HepG2 (cell line): ENCODE measurements at regions of chr1 and their contacts with region 1.

Region 1: DNA sequence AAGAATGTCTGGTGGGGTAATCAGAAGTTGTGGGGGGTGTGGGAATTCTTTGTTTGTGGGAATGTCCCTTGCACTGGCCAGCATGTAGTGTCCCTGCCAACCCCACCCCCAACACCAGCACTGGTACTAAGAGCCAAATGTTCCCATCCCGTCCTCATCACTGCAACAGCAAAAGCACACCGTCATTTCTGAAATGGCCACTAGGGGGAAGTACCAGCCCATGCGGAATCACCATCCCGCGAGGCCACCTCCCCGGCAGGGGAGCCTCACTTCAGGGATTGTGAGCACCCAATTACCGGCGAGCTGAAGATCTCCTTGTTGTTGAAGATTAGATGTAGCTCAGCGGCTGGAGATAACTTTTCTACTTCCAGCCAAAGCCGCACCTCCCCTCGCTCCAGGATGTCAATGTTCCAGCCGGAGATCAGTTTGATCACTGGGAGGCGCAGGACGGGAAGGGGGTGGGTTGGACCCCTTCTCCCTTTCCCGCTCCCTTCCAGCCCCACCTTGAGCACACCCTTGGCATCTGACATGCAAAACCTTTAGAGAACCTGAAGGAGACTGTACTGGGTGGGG is 41.0 kb downstream of the MYOM3 start:
- DNase-seq: peak; percentile 68
- ATAC-seq: peak; percentile 94
- H3K4me3 ChIP-seq: no peak overlapping the region
- H3K27ac ChIP-seq: no peak overlapping the region
- H3K4me1 ChIP-seq: no peaks in the 10 kb centered on the region
- H3K27me3 ChIP-seq: no peaks in the 10 kb centered on the region
- CTCF ChIP-seq: peak; percentile 96
- EP300 ChIP-seq: no peak
- POLR2A ChIP-seq: no peak
- RAD21 ChIP-seq: peak; percentile 86

Region 2: DNA sequence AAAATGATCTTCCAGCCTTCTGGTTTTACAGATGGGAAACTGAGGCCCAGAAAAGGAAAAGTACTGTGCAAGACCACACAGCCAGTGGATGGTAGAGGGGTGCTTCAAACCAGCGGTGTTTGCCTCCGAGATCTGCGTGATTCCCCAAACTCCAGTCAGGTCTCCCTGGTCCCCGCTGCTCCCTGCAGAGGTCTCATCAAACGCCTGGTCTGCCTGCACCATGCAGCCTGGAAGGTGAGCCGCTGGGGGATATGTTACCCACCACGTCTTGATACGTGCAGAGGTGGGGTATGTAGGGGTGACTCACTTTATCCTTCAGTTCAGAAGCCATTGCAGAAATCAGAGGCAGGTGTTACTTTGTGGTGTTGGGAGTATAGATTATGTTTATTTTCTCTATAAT is 15.2 kb before region 1 on chr1:
- CTCF ChIA-PET with region 1: no interaction called
- POLR2A ChIA-PET with region 1: no interaction called
- in situ Hi-C with region 1: no loop called
- intact Hi-C with region 1: no loop called
- DNase-seq: no peak
- ATAC-seq: no peak
- H3K4me3 ChIP-seq: no peak overlapping the region
- H3K27ac ChIP-seq: no peak overlapping the region
- H3K4me1 ChIP-seq: peaks cover 8% of the 10 kb centered on the region
- H3K27me3 ChIP-seq: no peaks in the 10 kb centered on the region
- CTCF ChIP-seq: no peak
- EP300 ChIP-seq: no peak
- POLR2A ChIP-seq: no peak
- RAD21 ChIP-seq: no peak

Region 3: DNA sequence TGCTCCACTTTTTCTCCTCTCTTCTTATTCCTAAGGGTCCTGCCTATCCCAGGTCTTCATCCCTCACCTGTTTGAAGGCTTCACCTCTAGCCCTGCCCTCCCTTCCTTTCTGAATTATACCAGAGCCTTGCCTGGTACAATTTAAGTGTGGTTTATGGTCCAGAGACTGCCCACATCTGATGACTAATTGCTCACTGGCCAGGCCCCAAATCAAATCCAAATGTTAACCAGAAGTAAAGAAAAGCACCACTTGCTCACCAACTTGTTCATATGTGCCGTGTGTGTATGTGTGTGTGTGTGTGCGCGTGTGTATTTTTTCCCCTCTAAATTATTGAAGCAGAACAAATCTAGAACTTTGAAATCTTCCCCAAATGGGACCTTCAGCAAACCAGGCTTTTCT is 14.6 kb after region 1 on chr1:
- CTCF ChIA-PET with region 1: no interaction called
- POLR2A ChIA-PET with region 1: no interaction called
- in situ Hi-C with region 1: no loop called
- intact Hi-C with region 1: no loop called
- DNase-seq: no peak
- ATAC-seq: no peak
- H3K4me3 ChIP-seq: no peak overlapping the region
- H3K27ac ChIP-seq: no peak overlapping the region
- H3K4me1 ChIP-seq: no peaks in the 10 kb centered on the region
- H3K27me3 ChIP-seq: no peaks in the 10 kb centered on the region
- CTCF ChIP-seq: no peak
- EP300 ChIP-seq: no peak
- POLR2A ChIP-seq: no peak
- RAD21 ChIP-seq: no peak

Region 4: DNA sequence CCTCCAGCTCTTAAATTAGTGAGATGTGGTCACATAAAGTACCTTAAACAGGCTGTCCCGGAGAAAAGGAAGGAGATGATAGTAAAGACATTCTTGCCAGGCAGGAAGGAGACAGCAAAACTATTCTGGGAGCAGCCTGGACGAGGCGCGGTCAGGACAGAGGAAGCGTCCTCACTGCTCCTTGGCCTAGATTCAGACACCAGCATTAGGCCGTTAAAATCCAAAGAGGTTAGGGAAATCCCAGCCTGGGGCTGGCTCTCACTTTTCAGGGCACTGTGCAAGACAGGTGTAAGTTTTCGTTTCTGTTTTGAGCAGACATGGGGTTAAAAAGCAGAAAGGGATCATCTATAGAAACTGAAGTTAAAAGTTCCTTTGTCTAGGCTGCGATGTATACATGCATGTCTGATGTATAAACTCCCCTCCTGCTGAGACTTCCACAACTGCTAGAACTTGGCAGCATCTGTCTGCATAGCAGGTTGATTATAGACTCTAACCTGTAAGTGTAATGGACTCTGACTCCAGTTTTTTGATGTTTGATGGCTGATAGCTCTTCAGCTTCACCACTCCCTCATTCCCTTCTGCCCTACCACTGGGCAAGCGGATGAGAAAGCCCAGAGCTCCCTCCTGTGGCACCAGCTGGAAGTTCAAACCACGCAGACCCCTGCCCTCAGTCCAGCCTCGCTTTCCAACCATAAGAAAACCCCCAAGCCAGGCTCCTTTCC is 321.1 kb after region 1 on chr1:
- CTCF ChIA-PET with region 1: interaction called, 14 read pairs
- POLR2A ChIA-PET with region 1: no interaction called
- in situ Hi-C with region 1: loop called (anchors 10 kb)
- intact Hi-C with region 1: loop called (anchors 1 kb)
- DNase-seq: peak; percentile 47
- ATAC-seq: peak; percentile 92
- H3K4me3 ChIP-seq: no peak overlapping the region
- H3K27ac ChIP-seq: no peak overlapping the region
- H3K4me1 ChIP-seq: peaks cover 23% of the 10 kb centered on the region
- H3K27me3 ChIP-seq: no peaks in the 10 kb centered on the region
- CTCF ChIP-seq: peak; percentile 90
- EP300 ChIP-seq: no peak
- POLR2A ChIP-seq: no peak
- RAD21 ChIP-seq: peak; percentile 65

Region 5: GRCh38 chr1:24536391-24536840 is 465.5 kb after region 1 on chr1:
- CTCF ChIA-PET with region 1: no interaction called
- POLR2A ChIA-PET with region 1: no interaction called
- in situ Hi-C with region 1: no loop called
- intact Hi-C with region 1: no loop called
- DNase-seq: peak; percentile 35
- ATAC-seq: no peak
- H3K4me3 ChIP-seq: no peak overlapping the region
- H3K27ac ChIP-seq: peak overlapping the region; percentile 64
- H3K4me1 ChIP-seq: peaks cover 55% of the 10 kb centered on the region
- H3K27me3 ChIP-seq: no peaks in the 10 kb centered on the region
- CTCF ChIP-seq: no peak
- EP300 ChIP-seq: no peak
- POLR2A ChIP-seq: no peak
- RAD21 ChIP-seq: no peak